Activated CD8-positive, alpha-beta memory T cell treated with anti-CD3 and anti-CD28 coated beads, Interleukin-2, amount 10 ng/mL, durations not matched to agents 7 days and 5 days (primary cell): ENCODE measurements at regions of chr2 and their contacts with region 1.

Region 1: GRCh38 chr2:12716282-12717190 is at the start of gene TRIB2:
- DNase-seq: peak; percentile 92
- ATAC-seq: peak; percentile 88
- H3K4me3 Mint-ChIP-seq: peak within 1 kb of the TSS; percentile 94
- H3K27ac Mint-ChIP-seq: peak within 1 kb of the TSS; percentile 88
- H3K4me1 Mint-ChIP-seq: peaks cover 40% of the 10 kb centered on the region
- H3K27me3 Mint-ChIP-seq: peaks cover 12% of the 10 kb centered on the region
- total RNA-seq, gene TRIB2: 14.3 to 28.5 TPM

Region 2: GRCh38 chr2:11863513-11864328 is 852.8 kb before region 1 on chr2:
- CTCF ChIA-PET with region 1: interaction called, 27 read pairs
- DNase-seq: peak; percentile 66
- ATAC-seq: peak; percentile 80
- H3K4me3 Mint-ChIP-seq: no peak overlapping the region
- H3K27ac Mint-ChIP-seq: no peak overlapping the region
- H3K4me1 Mint-ChIP-seq: peaks cover 13% of the 10 kb centered on the region
- H3K27me3 Mint-ChIP-seq: peaks cover 8% of the 10 kb centered on the region

Region 3: GRCh38 chr2:12430407-12431133 is 286.0 kb before region 1 on chr2:
- CTCF ChIA-PET with region 1: interaction called, 15 read pairs
- DNase-seq: no peak
- ATAC-seq: peak; percentile 90
- H3K4me3 Mint-ChIP-seq: peak overlapping the region; percentile 66
- H3K27ac Mint-ChIP-seq: peak overlapping the region; percentile 65
- H3K4me1 Mint-ChIP-seq: peaks cover 15% of the 10 kb centered on the region
- H3K27me3 Mint-ChIP-seq: no peaks in the 10 kb centered on the region

Region 4: GRCh38 chr2:12579018-12579417 is 137.5 kb before region 1 on chr2:
- CTCF ChIA-PET with region 1: no interaction called
- DNase-seq: no peak
- ATAC-seq: no peak
- H3K4me3 Mint-ChIP-seq: no peak overlapping the region
- H3K27ac Mint-ChIP-seq: no peak overlapping the region
- H3K4me1 Mint-ChIP-seq: no peaks in the 10 kb centered on the region
- H3K27me3 Mint-ChIP-seq: no peaks in the 10 kb centered on the region

Region 5: DNA sequence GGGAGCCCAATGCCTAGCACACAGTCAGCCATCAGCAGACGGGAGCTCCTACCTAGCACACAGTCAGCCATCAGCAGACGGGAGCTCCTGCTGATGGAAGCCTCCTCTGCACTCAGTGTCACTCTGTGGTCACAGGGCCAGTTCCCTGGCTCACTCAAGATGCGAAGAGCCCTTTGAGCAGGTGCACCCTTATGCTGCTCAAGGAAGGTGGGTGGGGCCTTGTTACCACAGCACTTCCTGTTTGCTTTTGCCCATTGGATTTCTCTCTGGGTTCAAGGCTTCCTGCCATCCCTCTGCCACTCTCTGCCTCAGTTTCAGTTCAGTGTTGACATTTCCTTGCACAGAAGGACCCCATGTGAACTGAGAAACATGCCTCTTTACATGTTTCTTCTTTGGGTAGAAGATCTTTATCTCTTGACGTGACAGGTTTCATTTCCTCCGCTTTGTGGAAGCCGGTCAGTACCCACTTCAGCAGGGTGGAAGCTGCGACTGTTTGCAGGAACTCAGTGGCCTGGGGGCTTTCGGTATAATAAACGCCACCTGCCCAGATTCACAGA is 11.8 kb after region 1 on chr2:
- CTCF ChIA-PET with region 1: interaction called, 25 read pairs
- DNase-seq: peak; percentile 89
- ATAC-seq: peak; percentile 86
- H3K4me3 Mint-ChIP-seq: peak overlapping the region; percentile 51
- H3K27ac Mint-ChIP-seq: peak overlapping the region; percentile 76
- H3K4me1 Mint-ChIP-seq: peaks cover 49% of the 10 kb centered on the region
- H3K27me3 Mint-ChIP-seq: no peaks in the 10 kb centered on the region

Region 6: GRCh38 chr2:12778369-12778768 is 61.8 kb after region 1 on chr2:
- CTCF ChIA-PET with region 1: no interaction called
- DNase-seq: no peak
- ATAC-seq: no peak
- H3K4me3 Mint-ChIP-seq: no peak overlapping the region
- H3K27ac Mint-ChIP-seq: no peak overlapping the region
- H3K4me1 Mint-ChIP-seq: peaks cover 5% of the 10 kb centered on the region
- H3K27me3 Mint-ChIP-seq: no peaks in the 10 kb centered on the region

Region 7: DNA sequence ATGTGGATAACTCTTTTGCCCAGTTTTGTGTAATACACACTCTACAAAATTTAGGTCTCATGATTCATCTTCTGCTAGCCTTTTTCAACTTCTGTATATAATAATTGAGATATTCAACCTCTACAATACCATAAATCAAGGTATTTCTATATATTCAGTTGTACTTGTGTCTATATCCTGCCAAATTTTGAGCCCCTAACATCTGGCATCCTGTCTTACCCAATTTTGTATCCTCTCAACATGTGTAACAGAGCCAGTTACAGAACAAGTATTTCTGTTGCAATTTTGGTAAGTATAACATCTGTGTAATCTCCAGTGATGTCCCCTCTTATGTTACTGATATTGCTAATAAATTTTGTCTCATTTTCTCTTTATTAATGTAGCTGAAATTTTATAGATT is 146.0 kb after region 1 on chr2:
- CTCF ChIA-PET with region 1: no interaction called
- DNase-seq: no peak
- ATAC-seq: no peak
- H3K4me3 Mint-ChIP-seq: no peak overlapping the region
- H3K27ac Mint-ChIP-seq: no peak overlapping the region
- H3K4me1 Mint-ChIP-seq: peaks cover 24% of the 10 kb centered on the region
- H3K27me3 Mint-ChIP-seq: peaks cover 18% of the 10 kb centered on the region

Region 8: DNA sequence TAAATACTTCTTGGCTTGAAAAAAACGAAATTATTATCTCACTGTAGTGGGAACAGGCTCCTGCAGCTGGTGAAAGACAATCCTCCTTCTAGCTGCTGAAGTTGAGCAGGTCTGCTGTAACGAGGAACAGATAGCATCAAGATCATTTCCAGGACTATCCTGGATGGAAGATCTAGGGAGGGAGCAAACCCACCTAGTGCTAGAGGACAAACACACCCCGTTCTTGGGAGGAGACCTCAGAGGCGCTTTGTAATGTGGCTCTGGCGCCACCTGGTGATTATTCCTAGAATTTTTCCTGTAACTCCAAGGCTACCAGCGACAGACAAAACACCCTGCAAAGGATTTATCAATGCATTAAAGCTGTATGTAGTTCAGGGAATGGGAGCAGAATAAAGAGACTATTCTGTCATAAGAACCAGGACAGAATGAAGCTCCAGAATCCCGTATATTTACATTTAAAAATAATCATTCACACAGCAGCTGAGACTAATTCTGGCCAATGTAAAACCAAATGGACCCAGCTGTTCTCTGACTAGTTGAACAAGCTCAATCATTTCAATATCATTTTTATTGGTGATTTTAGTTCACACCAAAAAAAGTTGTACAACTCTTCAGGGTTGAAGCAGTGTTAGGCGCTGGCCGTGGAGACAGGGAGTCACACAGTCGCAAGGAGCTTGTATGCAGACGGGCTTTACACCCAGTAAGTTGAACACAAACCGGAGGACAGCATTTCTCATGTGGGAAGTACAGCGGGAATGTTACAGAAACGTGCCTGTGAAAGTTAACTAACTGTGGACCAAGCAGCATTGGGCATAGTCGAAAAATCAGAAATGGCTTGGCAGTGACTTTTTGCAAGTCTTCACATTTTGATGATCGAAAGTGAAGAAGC is 290.5 kb after region 1 on chr2:
- CTCF ChIA-PET with region 1: interaction called, 20 read pairs
- DNase-seq: peak; percentile 70
- ATAC-seq: peak; percentile 84
- H3K4me3 Mint-ChIP-seq: no peak overlapping the region
- H3K27ac Mint-ChIP-seq: no peak overlapping the region
- H3K4me1 Mint-ChIP-seq: peaks cover 2% of the 10 kb centered on the region
- H3K27me3 Mint-ChIP-seq: peaks cover 26% of the 10 kb centered on the region